HEK293T (cell line): ENCODE measurements at regions of chr12 and their contacts with region 1.

Region 1: DNA sequence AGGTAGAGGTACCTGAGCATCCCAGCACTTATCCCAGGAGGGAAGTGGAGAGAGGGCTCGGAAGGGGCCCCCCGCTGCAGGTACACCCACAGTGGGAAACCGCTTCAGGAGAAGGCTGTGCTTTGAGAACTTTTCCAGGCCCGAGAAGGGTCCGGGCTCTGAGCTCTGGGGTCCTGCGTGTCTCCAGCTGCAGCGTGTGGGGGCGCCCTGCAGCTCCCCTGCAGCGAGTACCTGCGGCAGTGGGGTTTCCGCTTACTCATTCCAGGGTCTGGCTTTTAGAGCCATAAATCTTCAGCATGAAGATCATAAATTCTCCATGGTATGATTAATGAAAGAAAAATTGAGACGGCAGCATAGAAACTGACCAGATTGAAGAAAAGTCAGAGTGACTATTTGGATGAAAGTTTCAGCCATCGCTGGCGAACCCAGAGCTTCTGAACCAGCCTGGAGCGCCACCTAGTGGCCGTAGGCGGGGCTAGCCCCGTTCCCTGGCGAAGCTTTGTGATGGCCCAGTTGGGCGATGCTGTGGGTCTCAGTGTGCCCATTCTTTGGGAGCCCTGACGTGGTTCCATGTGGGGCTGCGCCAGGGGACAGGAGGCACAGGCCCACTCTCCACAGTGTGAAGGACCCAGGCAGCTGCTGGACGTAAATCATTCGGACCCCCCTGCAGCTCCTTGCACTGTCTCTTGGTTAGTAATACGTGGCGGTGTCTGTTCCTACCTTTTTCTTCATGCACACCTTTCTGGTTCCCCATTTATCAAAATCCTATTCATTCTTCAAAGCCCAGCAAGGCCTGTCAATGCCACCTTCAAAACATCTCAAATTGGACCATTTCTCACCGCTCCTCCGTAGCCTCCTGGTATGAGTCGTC is 198.2 kb downstream of the TSPAN9 start:
- DNase-seq: peak; percentile 83

Region 2: DNA sequence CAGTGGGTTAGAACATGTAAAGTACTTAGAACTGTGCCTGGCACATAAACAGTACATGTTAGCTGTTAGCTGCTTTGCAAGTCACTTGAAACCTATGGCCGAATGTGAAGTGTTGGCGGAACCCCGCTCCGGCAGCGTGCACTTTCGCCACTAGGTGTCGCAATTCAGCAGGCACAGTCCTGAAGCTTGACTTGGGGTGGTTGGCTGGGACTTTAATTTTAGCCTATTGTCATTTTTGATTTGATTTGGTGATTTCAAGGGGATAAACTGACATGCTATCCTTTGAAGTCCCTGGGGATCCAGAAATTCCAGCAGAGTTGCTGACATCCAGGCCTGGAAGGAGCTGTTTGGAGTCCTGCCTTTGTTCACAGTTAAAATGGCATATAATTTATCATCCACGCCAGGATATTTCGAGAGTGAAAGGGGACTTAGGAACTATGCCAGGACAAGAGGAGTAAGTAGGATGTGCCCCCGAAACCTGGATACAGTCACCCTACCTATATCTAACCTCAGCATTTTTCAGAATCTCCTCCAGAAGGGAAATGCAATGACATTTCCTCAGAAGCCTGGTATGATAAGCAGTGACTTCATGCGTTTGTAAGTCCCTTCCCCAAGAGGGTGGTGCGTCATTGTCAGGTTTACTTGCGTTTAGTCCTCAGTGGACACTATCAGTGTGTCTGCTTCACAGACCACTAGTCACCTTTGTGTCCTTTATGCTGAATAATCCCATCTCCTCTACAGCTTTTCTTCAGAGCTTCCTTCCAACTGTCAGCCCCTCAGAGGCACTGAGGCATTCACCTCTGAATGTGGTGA is 201.8 kb before region 1 on chr12:
- CTCF ChIA-PET with region 1: interaction called, 15 read pairs
- POLR2A ChIA-PET with region 1: interaction called, 3 read pairs
- DNase-seq: peak; percentile 88

Region 3: DNA sequence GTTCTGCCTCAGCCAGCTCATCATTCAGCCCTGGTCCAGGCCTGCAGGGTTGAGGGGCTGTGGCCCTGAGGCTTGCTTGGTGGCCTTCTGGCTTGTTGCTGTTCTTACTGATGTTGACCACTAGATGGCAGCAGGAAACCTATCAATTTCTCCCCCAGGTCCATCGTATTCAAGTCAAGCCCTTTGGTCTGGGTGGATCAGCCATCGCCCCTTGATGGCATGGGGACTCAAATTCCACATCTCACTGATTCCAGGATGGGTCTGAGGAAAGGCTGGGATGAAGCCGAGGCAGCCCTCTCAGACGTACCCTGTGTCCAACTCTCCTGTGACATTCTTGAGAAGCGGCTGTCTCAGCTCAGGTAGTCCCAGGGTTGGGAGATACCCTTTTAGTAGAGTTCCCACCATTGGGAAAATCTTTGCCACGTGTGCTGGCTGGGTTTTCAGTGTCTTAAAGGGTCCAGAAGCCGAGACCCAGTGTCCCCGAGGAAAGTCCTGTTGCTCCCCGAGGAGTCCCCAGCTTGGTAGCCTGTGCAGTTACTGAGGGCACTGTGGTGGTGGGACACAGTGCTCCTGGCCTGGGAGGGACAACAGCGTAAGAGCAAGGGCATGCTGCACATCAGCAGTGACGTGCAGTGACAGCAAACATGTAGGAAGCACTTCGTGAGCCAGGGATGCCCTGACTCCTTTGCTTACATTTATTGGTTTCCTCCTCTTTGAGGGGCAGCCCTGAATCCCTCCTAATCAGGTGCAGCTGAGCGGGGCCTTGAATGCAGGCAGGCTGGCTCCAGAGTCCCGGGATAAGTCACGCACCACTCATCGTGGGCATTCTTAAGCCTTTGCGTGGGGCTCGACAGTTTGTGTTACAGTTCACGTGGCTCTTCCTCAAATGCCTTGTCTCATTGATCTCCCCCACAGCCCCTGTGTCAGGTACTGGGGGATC is 139.6 kb before region 1 on chr12:
- CTCF ChIA-PET with region 1: interaction called, 66 read pairs
- POLR2A ChIA-PET with region 1: interaction called, 3 read pairs
- DNase-seq: peak; percentile 88

Region 4: GRCh38 chr12:3218228-3219171 is 56.9 kb before region 1 on chr12:
- CTCF ChIA-PET with region 1: interaction called, 16 read pairs
- POLR2A ChIA-PET with region 1: no interaction called
- DNase-seq: peak; percentile 28

Region 5: GRCh38 chr12:3251691-3252090 is 23.7 kb before region 1 on chr12:
- CTCF ChIA-PET with region 1: no interaction called
- POLR2A ChIA-PET with region 1: no interaction called
- DNase-seq: no peak

Region 6: GRCh38 chr12:3261782-3262359 is 13.5 kb before region 1 on chr12:
- CTCF ChIA-PET with region 1: interaction called, 31 read pairs
- POLR2A ChIA-PET with region 1: interaction called, 3 read pairs
- DNase-seq: no peak

Region 7: GRCh38 chr12:3288690-3289089 is 13.3 kb after region 1 on chr12:
- CTCF ChIA-PET with region 1: interaction called, 10 read pairs
- POLR2A ChIA-PET with region 1: no interaction called
- DNase-seq: no peak

Region 8: DNA sequence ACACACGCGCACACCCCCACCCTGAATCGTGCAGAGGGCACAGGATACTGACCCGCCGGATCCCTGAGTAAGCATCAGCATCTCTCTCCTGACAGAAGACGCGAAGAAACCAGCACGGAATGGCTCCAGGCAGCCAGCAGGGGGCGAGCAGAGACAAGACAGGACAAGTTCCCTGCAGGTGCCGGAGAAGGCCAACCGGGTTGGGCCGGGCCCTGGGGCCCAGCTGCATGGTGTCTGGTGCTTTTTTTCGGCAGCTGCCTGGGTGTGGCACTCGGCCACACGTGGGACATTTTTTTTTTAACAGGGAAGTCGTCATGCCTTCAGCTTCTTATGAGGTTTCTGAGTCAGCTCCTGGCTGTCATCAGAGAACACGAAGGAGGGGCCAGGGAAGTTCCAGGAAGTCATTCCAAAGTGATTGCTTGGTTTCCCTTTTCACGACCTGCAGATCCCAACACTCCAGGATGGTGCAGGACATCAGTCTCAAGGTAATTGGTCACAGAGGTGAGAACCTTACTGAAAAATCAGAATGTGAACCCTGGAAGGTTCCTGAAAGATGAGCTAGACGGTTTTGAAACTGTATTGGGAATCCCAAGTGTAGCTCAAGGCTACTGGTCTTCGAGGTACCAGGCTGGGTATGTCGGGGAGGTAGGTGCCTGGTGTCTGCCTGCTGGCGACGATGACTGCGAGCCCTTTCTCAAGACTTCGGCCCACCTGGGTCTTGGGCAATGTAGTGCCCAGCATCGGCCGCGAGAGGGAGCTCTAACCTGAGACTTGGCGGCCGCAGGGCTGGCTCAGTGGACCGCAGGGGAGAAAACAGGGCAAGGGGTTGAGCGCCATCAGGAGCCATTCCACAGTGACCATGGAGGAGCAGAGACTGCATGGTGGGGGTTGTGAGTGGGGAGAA is 24.8 kb after region 1 on chr12:
- CTCF ChIA-PET with region 1: interaction called, 19 read pairs
- POLR2A ChIA-PET with region 1: no interaction called
- DNase-seq: peak; percentile 83